ENCODE measurements at regions of chr11 and their contacts with region 1.

Region 1: DNA sequence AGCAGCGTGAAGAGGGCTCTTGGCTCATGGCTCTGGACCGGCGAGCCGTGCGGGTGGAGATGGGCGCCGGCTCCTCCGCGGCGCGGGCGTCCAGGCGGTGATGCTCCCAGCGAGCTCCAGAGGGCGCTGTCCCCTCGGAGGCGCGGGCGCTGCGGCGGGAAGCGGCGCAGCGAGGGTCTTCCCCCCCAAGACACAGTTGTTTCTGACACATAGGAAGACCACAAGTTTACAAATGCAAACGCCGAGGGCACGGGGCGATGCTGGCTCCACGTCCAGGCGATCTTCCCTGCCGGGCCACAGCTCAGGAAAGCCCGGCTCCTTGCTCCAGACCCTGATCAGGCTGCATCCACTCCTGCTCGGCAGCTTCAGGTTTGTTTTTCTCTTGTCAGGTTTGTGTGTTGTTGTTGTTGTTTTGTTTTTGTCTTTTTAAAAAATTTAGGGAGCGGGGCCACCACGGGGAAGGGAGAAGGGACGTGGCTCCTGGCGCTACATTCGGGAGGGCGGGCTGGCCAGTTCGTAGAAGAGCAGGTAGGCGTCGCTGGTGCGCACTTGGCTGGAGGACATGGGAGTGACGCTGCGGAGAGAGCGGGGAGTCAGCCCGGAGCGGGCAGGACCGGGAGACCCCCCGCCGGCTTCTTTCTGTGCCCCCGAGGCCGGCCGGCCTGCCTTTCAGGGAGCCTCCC is 10.0 kb upstream of the MFRP start:
- DNase-seq: peak; percentile 65
- ATAC-seq: peak; percentile 90
- H3K4me3 Mint-ChIP-seq: peak overlapping the region; percentile 89
- H3K27ac Mint-ChIP-seq: peak overlapping the region; percentile 37
- H3K4me1 Mint-ChIP-seq: peaks cover 9% of the 10 kb centered on the region
- H3K27me3 Mint-ChIP-seq: peaks cover 43% of the 10 kb centered on the region
- CTCF ChIP-seq: peak; percentile 75

Region 2: GRCh38 chr11:119339589-119340343 is 16.7 kb before region 1 on chr11:
- CTCF ChIA-PET with region 1: interaction called, 6 read pairs
- POLR2A ChIA-PET with region 1: interaction called, 3 read pairs
- intact Hi-C with region 1: loop called (anchors 1 kb)
- DNase-seq: peak; percentile 19
- ATAC-seq: peak; percentile 16
- H3K4me3 Mint-ChIP-seq: no peak overlapping the region
- H3K27ac Mint-ChIP-seq: no peak overlapping the region
- H3K4me1 Mint-ChIP-seq: peaks cover 31% of the 10 kb centered on the region
- H3K27me3 Mint-ChIP-seq: peaks cover 36% of the 10 kb centered on the region
- CTCF ChIP-seq: no peak

Region 3: DNA sequence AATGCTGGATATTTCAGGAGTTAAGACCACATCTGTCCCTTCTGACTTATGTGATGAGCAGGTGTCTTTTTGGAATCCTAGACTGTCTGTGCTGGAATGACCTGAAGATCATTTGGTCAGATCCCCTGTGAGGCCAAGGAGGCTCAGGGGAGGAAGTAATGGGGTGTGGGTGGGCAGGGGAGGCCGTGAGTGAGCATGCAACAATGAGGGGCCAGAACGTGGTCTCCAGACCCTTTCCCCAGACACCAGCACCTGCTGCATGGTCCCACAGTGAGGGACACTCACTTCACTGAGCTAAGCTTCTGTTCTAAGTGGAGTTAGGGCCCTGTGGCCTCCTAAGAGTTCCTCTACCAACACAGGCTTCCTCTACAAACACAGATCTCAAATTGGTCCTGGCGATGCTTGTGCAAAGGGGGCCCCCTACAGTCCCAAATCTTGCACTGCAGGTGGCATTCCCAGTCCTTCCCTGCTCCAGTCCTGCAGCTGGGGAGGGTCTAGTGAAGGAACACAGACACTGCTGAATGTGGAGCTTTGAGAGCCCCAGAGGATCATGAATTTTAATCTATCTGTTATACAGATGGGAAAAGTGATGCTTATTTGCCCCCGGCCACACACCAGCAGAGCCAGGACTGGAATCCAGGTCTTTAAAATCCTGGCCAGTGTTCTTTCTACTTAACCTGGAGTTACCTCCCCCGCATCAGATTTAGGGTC is 17.6 kb after region 1 on chr11:
- CTCF ChIA-PET with region 1: interaction called, 18 read pairs
- POLR2A ChIA-PET with region 1: no interaction called
- intact Hi-C with region 1: loop called (anchors 1 kb)
- DNase-seq: no peak
- ATAC-seq: peak; percentile 50
- H3K4me3 Mint-ChIP-seq: no peak overlapping the region
- H3K27ac Mint-ChIP-seq: no peak overlapping the region
- H3K4me1 Mint-ChIP-seq: no peaks in the 10 kb centered on the region
- H3K27me3 Mint-ChIP-seq: peaks cover 12% of the 10 kb centered on the region
- CTCF ChIP-seq: no peak

Region 4: DNA sequence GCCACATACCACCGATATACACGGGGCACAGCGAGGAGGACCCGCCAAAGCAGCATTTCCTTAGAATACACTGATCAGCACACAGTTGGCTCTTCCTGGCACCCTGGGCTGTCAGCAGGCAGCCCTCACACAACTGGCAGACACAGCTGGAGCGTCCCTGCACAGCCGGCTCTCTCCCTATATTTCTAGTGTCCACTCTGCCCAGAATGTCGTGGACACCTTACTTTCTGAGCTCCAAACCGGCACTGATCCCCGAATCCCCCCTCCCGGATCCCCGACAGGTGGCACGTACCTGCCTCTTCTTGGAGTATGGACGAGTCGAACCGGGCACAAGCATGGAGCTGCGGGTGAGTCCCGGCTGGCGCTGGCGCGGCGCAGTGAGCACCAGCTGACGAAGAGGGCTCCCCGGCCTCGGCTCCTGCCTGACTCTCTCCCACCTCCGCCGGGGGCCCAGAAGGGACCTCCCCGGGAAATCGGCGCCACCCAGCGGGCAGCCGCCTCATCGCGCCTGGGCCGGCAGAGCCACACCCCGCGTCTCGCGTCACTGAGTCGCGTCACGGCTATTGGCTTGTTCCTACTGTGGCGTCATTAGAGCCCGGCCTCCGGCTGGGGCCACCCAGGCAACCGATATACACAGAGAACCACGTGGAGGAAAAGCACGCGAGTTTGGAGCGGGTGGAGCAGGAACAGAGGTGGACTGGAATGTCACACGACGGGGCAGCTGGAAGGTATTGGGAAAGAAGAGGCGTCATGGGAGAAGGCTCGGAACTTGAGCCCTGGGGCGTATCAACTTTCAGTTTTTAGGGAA is 24.9 kb after region 1 on chr11 and contains the start of gene USP2:
- CTCF ChIA-PET with region 1: interaction called, 19 read pairs
- POLR2A ChIA-PET with region 1: no interaction called
- intact Hi-C with region 1: loop called (anchors 1 kb)
- DNase-seq: peak; percentile 96
- ATAC-seq: peak; percentile 99
- H3K4me3 Mint-ChIP-seq: no peak within 1 kb of the TSS
- H3K27ac Mint-ChIP-seq: peak within 1 kb of the TSS; percentile 21
- H3K4me1 Mint-ChIP-seq: no peaks in the 10 kb centered on the region
- H3K27me3 Mint-ChIP-seq: peaks cover 3% of the 10 kb centered on the region
- CTCF ChIP-seq: peak; percentile 46
- total RNA-seq, gene USP2: 0.24 TPM in 1 of 2 replicates, not detected in the other

Region 5: GRCh38 chr11:119403021-119403420 is 46.5 kb after region 1 on chr11:
- CTCF ChIA-PET with region 1: no interaction called
- POLR2A ChIA-PET with region 1: no interaction called
- intact Hi-C with region 1: no loop called
- DNase-seq: no peak
- ATAC-seq: no peak
- H3K4me3 Mint-ChIP-seq: no peak overlapping the region
- H3K27ac Mint-ChIP-seq: no peak overlapping the region
- H3K4me1 Mint-ChIP-seq: peaks cover 3% of the 10 kb centered on the region
- H3K27me3 Mint-ChIP-seq: peaks cover 23% of the 10 kb centered on the region
- CTCF ChIP-seq: no peak

Region 6: GRCh38 chr11:119474682-119475596 is 118.4 kb after region 1 on chr11:
- CTCF ChIA-PET with region 1: interaction called, 50 read pairs
- POLR2A ChIA-PET with region 1: no interaction called
- intact Hi-C with region 1: loop called (anchors 1 kb)
- DNase-seq: no peak
- ATAC-seq: peak; percentile 54
- H3K4me3 Mint-ChIP-seq: no peak overlapping the region
- H3K27ac Mint-ChIP-seq: no peak overlapping the region
- H3K4me1 Mint-ChIP-seq: no peaks in the 10 kb centered on the region
- H3K27me3 Mint-ChIP-seq: peaks cover 37% of the 10 kb centered on the region
- CTCF ChIP-seq: no peak

Region 7: DNA sequence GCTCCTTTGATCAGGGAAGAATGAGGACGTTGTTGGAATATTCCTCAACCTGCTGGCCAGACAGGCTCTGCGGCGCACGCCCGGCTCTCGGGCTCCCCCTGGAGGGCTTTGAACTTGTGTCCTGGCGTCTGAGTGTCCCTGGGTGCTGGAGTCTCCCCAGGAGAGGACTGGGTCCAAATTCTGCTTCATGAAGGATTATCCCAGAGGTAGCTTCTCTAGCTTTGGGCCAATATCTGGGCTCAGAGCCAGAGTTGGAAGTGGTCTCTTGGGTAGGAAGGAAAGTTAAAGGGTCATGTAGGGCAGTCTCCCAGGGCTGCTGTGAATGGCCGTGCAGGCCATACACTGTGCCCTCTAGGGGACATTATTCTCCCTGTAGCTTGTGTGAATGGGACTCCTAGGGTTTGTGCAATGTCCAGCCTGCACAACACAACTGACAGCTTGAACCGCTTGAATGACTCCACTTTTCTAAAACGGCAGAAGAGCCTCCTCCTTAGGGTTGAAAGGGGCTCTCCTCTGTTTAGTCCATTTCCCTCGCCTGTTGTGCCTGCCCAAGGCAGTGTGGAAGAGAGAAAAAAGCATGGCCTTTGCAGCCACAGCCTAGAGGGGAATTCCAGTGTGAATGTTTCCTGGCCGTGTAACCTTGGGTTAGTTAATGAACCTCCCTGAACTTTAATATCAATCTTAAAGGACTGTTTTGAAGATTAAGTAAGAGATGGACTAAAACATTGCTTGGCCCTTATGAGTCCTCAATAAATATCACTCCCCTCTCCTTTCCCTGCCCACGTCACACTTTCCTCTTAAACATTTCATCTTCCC is 177.6 kb after region 1 on chr11:
- CTCF ChIA-PET with region 1: interaction called, 4 read pairs
- POLR2A ChIA-PET with region 1: no interaction called
- intact Hi-C with region 1: loop called (anchors 1 kb)
- DNase-seq: peak; percentile 57
- ATAC-seq: peak; percentile 79
- H3K4me3 Mint-ChIP-seq: no peak overlapping the region
- H3K27ac Mint-ChIP-seq: no peak overlapping the region
- H3K4me1 Mint-ChIP-seq: no peaks in the 10 kb centered on the region
- H3K27me3 Mint-ChIP-seq: peaks cover 37% of the 10 kb centered on the region
- CTCF ChIP-seq: peak; percentile 61

Region 8: GRCh38 chr11:119964136-119965025 is 607.9 kb after region 1 on chr11:
- CTCF ChIA-PET with region 1: no interaction called
- POLR2A ChIA-PET with region 1: no interaction called
- intact Hi-C with region 1: no loop called
- DNase-seq: no peak
- ATAC-seq: no peak
- H3K4me3 Mint-ChIP-seq: no peak overlapping the region
- H3K27ac Mint-ChIP-seq: no peak overlapping the region
- H3K4me1 Mint-ChIP-seq: no peaks in the 10 kb centered on the region
- H3K27me3 Mint-ChIP-seq: no peaks in the 10 kb centered on the region
- CTCF ChIP-seq: no peak

Region 9: GRCh38 chr11:120108154-120108865 is 751.8 kb after region 1 on chr11:
- CTCF ChIA-PET with region 1: interaction called, 13 read pairs
- POLR2A ChIA-PET with region 1: no interaction called
- intact Hi-C with region 1: no loop called
- DNase-seq: peak; percentile 59
- ATAC-seq: peak; percentile 86
- H3K4me3 Mint-ChIP-seq: no peak overlapping the region
- H3K27ac Mint-ChIP-seq: no peak overlapping the region
- H3K4me1 Mint-ChIP-seq: no peaks in the 10 kb centered on the region
- H3K27me3 Mint-ChIP-seq: peaks cover 21% of the 10 kb centered on the region
- CTCF ChIP-seq: no peak